ENCODE measurements at regions of chr18 and their contacts with region 1.

Region 1: GRCh38 chr18:77207540-77207939 is 42.1 kb upstream of the GALR1 start:
- DNase-seq: peak in 7 of 9 donors; percentile 53 to 74 (median 62)
- ATAC-seq: peak; percentile 91
- H3K4me3 ChIP-seq: no peak overlapping the region
- H3K4me3 Mint-ChIP-seq: peak overlapping the region; percentile 54 to 99 (median 72)
- H3K27ac ChIP-seq: no peak overlapping the region
- H3K27ac Mint-ChIP-seq: peak overlapping the region; percentile 37 to 99 (median 70)
- H3K4me1 ChIP-seq: peaks cover 23 to 33% of the 10 kb centered on the region in 2 donors
- H3K4me1 Mint-ChIP-seq: peaks cover 24 to 55% (median 47%) of the 10 kb centered on the region in 7 donors
- H3K27me3 ChIP-seq: no peaks in the 10 kb centered on the region
- H3K27me3 Mint-ChIP-seq: peaks cover 0 to 9% (median 0%) of the 10 kb centered on the region in 5 donors

Region 2: GRCh38 chr18:76875390-76876325 is 331.9 kb before region 1 on chr18:
- CTCF ChIA-PET with region 1: no interaction called
- POLR2A ChIA-PET with region 1: no interaction called
- intact Hi-C with region 1: loop called in 1 of 2 experiments (anchors 1 kb)
- DNase-seq: peak in 5 of 9 donors; percentile 20 to 35 (median 28)
- ATAC-seq: peak; percentile 65
- H3K4me3 ChIP-seq: no peak overlapping the region
- H3K4me3 Mint-ChIP-seq: no peak overlapping the region
- H3K27ac ChIP-seq: no peak overlapping the region
- H3K27ac Mint-ChIP-seq: peak overlapping the region in 1 of 9 donors; percentile 5
- H3K4me1 ChIP-seq: no peaks in the 10 kb centered on the region
- H3K4me1 Mint-ChIP-seq: peaks cover 0 to 14% (median 5%) of the 10 kb centered on the region in 7 donors
- H3K27me3 ChIP-seq: no peaks in the 10 kb centered on the region
- H3K27me3 Mint-ChIP-seq: no peaks in the 10 kb centered on the region

Region 3: GRCh38 chr18:76982841-76983587 is 224.5 kb before region 1 on chr18:
- CTCF ChIA-PET with region 1: interaction called, 3 read pairs
- POLR2A ChIA-PET with region 1: interaction called, 6 read pairs
- intact Hi-C with region 1: loop called (anchors 1 to 5 kb)
- DNase-seq: peak; percentile 62 to 87 (median 81)
- ATAC-seq: peak; percentile 98
- H3K4me3 ChIP-seq: no peak overlapping the region
- H3K4me3 Mint-ChIP-seq: peak overlapping the region in 3 of 10 donors; percentile 27 to 53 (median 40)
- H3K27ac ChIP-seq: no peak overlapping the region
- H3K27ac Mint-ChIP-seq: peak overlapping the region in 2 of 9 donors; percentile 4 to 51
- H3K4me1 ChIP-seq: peaks cover 0 to 7% of the 10 kb centered on the region in 2 donors
- H3K4me1 Mint-ChIP-seq: peaks cover 0 to 8% (median 6%) of the 10 kb centered on the region in 7 donors
- H3K27me3 ChIP-seq: no peaks in the 10 kb centered on the region
- H3K27me3 Mint-ChIP-seq: no peaks in the 10 kb centered on the region

Region 4: GRCh38 chr18:77061946-77062517 is 145.5 kb before region 1 on chr18:
- CTCF ChIA-PET with region 1: interaction called, 7 read pairs
- POLR2A ChIA-PET with region 1: interaction called, 3 read pairs
- intact Hi-C with region 1: loop called (anchors 1 to 2 kb)
- DNase-seq: peak in 1 of 9 donors; percentile 32
- ATAC-seq: peak; percentile 64
- H3K4me3 ChIP-seq: peak overlapping the region; percentile 16
- H3K4me3 Mint-ChIP-seq: peak overlapping the region; percentile 56 to 89 (median 74)
- H3K27ac ChIP-seq: peak overlapping the region; percentile 82
- H3K27ac Mint-ChIP-seq: peak overlapping the region; percentile 96 to 100 (median 99)
- H3K4me1 ChIP-seq: peaks cover 64 to 90% of the 10 kb centered on the region in 2 donors
- H3K4me1 Mint-ChIP-seq: peaks cover 48 to 89% (median 83%) of the 10 kb centered on the region in 7 donors
- H3K27me3 ChIP-seq: no peaks in the 10 kb centered on the region
- H3K27me3 Mint-ChIP-seq: no peaks in the 10 kb centered on the region

Region 5: DNA sequence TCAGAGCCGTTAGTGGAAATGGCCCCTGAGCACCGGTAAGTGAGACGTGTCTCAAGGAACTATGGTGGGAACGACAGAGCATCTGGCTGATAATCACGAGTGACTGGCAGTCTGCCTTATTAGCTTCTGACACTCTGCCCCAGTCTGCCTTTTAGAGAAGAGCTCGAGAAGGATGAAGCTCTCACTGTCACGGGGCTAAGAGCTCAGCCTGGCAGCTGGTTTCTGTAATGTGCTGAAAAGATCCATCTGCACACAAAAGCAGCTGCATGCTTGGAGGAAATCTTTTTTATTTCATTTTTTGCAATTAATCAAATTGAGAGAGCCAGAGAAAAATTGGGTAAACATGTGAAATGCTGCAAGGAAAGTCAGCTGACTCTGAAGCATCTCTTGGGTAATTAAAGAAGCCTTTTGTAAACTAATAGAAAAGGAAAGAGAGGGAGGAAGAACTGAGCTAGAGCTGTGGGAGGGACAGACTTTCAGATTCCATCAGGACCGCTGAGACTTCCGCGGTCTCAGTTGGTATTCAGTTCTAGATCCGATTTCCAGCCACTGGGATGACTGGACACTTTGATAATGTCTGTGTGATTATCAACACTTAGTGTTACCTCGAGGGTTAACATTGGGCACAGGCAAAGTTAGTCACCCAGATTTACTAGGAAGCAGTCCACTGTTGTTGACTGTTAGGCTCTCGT is 99.4 kb before region 1 on chr18:
- CTCF ChIA-PET with region 1: interaction called, 7 read pairs
- POLR2A ChIA-PET with region 1: no interaction called
- intact Hi-C with region 1: loop called (anchors 1 to 2 kb)
- DNase-seq: peak in 1 of 9 donors; percentile 29
- ATAC-seq: peak; percentile 43
- H3K4me3 ChIP-seq: peak overlapping the region; percentile 15
- H3K4me3 Mint-ChIP-seq: peak overlapping the region; percentile 17 to 92 (median 64)
- H3K27ac ChIP-seq: peak overlapping the region; percentile 70
- H3K27ac Mint-ChIP-seq: peak overlapping the region; percentile 78 to 99 (median 97)
- H3K4me1 ChIP-seq: peaks cover 61 to 69% of the 10 kb centered on the region in 2 donors
- H3K4me1 Mint-ChIP-seq: peaks cover 78 to 98% (median 96%) of the 10 kb centered on the region in 7 donors
- H3K27me3 ChIP-seq: no peaks in the 10 kb centered on the region
- H3K27me3 Mint-ChIP-seq: no peaks in the 10 kb centered on the region

Region 6: DNA sequence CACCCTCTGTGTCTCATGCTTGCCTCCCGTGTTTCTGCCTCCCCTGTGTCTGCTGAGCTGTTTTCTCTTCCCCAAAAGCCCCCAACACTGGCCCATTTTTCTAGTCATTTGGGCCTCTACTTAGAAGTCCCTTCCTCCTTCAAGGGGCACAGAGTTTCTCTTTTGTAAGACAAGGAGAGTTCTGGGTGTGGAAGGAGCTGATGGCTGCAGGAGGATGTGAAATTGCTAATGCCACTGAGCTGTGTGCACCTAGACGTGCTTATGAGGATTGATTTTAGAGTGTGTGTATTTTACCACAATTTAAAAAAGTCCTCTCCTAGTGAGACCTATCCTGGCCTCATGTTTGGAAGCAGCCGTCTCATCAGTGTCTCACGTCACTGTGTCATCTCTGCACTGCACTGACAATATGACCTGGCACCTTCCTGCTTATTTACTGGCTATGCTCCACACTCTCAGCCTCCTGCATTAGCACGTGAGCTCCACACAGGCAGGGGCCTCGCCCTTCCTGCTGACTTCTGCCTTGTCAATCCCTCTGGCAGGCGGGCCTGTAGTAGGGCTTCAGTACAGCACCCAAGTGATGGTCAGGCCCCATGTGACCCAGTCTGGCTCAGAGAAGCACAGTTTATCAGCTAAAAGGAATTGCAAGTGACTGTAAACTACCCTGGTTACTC is 67.0 kb before region 1 on chr18:
- CTCF ChIA-PET with region 1: interaction called, 6 read pairs
- POLR2A ChIA-PET with region 1: no interaction called
- intact Hi-C with region 1: loop called in 1 of 2 experiments (anchors 2 kb)
- DNase-seq: peak in 7 of 9 donors; percentile 61 to 77 (median 69)
- ATAC-seq: peak; percentile 92
- H3K4me3 ChIP-seq: no peak overlapping the region
- H3K4me3 Mint-ChIP-seq: peak overlapping the region; percentile 4 to 62 (median 43)
- H3K27ac ChIP-seq: peak overlapping the region; percentile 14
- H3K27ac Mint-ChIP-seq: peak overlapping the region; percentile 65 to 97 (median 86)
- H3K4me1 ChIP-seq: peaks cover 19 to 20% of the 10 kb centered on the region in 2 donors
- H3K4me1 Mint-ChIP-seq: peaks cover 21 to 48% (median 33%) of the 10 kb centered on the region in 7 donors
- H3K27me3 ChIP-seq: no peaks in the 10 kb centered on the region
- H3K27me3 Mint-ChIP-seq: no peaks in the 10 kb centered on the region

Region 7: GRCh38 chr18:77165503-77166188 is 41.9 kb before region 1 on chr18:
- CTCF ChIA-PET with region 1: no interaction called
- POLR2A ChIA-PET with region 1: no interaction called
- intact Hi-C with region 1: no loop called
- DNase-seq: no peak
- ATAC-seq: no peak
- H3K4me3 ChIP-seq: no peak overlapping the region
- H3K4me3 Mint-ChIP-seq: no peak overlapping the region
- H3K27ac ChIP-seq: no peak overlapping the region
- H3K27ac Mint-ChIP-seq: no peak overlapping the region
- H3K4me1 ChIP-seq: no peaks in the 10 kb centered on the region
- H3K4me1 Mint-ChIP-seq: peaks cover 0 to 4% (median 0%) of the 10 kb centered on the region in 7 donors
- H3K27me3 ChIP-seq: no peaks in the 10 kb centered on the region
- H3K27me3 Mint-ChIP-seq: peaks cover 0 to 13% (median 6%) of the 10 kb centered on the region in 5 donors

Region 8: GRCh38 chr18:77341527-77342325 is 134.2 kb after region 1 on chr18:
- CTCF ChIA-PET with region 1: no interaction called
- POLR2A ChIA-PET with region 1: no interaction called
- intact Hi-C with region 1: no loop called
- DNase-seq: no peak
- ATAC-seq: no peak
- H3K4me3 ChIP-seq: no peak overlapping the region
- H3K4me3 Mint-ChIP-seq: no peak overlapping the region
- H3K27ac ChIP-seq: no peak overlapping the region
- H3K27ac Mint-ChIP-seq: no peak overlapping the region
- H3K4me1 ChIP-seq: no peaks in the 10 kb centered on the region
- H3K4me1 Mint-ChIP-seq: peaks cover 0 to 2% (median 0%) of the 10 kb centered on the region in 7 donors
- H3K27me3 ChIP-seq: no peaks in the 10 kb centered on the region
- H3K27me3 Mint-ChIP-seq: peaks cover 9 to 23% (median 11%) of the 10 kb centered on the region in 5 donors